ENCODE measurements at regions of chr7 and their contacts with region 1.

Region 1: GRCh38 chr7:15874774-15875173 is 188.3 kb upstream of the MEOX2 start:
- DNase-seq: no peak
- ATAC-seq: no peak
- H3K4me3 ChIP-seq: no peak overlapping the region
- H3K4me3 Mint-ChIP-seq: no peak overlapping the region
- H3K27ac ChIP-seq: no peak overlapping the region
- H3K27ac Mint-ChIP-seq: no peak overlapping the region
- H3K4me1 ChIP-seq: no peaks in the 10 kb centered on the region
- H3K4me1 Mint-ChIP-seq: no peaks in the 10 kb centered on the region
- H3K27me3 ChIP-seq: no peaks in the 10 kb centered on the region
- H3K27me3 Mint-ChIP-seq: no peaks in the 10 kb centered on the region

Region 2: DNA sequence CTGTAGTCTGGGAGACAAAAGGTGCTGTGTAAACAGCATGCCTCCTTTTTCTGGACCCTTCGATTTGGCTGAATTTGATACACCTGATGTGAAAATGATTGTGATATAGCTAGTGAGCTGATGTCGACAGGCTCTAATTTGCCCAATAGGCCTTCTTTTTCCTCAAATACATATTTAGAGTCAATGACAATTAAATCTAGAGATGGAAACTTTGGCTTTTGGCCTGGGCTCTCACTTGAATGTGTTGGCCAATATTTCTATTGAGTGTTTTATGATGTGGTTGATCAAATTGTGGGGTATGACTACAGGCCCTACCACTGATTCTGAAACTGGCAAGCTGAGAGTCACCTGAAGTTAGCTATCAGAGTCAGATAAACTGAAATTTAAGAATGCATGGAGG is 36.5 kb before region 1 on chr7:
- CTCF ChIA-PET with region 1: no interaction called
- POLR2A ChIA-PET with region 1: no interaction called
- intact Hi-C with region 1: loop called in 1 of 2 experiments (anchors 1 kb)
- DNase-seq: no peak
- ATAC-seq: no peak
- H3K4me3 ChIP-seq: no peak overlapping the region
- H3K4me3 Mint-ChIP-seq: no peak overlapping the region
- H3K27ac ChIP-seq: no peak overlapping the region
- H3K27ac Mint-ChIP-seq: no peak overlapping the region
- H3K4me1 ChIP-seq: no peaks in the 10 kb centered on the region
- H3K4me1 Mint-ChIP-seq: no peaks in the 10 kb centered on the region
- H3K27me3 ChIP-seq: no peaks in the 10 kb centered on the region
- H3K27me3 Mint-ChIP-seq: no peaks in the 10 kb centered on the region

Region 3: DNA sequence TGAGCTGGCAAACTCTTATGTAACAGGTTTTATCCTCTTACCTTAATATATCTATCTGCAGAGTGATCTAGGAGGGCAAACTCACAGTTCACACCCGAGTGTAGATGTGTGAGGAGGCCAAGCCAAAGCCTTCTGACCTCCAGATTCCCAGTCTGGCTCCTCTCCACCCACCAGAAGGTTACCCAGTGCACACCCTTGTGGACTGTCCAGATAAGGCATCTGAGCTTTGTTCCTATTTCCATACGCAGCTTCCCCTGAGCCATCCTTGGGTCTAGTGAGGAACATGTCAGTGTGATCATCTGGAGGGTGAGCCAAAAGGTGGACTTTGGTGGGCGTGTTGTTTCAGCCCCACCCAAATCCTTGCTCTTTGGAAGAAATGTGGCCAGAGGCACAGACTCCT is 14.7 kb after region 1 on chr7:
- CTCF ChIA-PET with region 1: no interaction called
- POLR2A ChIA-PET with region 1: no interaction called
- intact Hi-C with region 1: no loop called
- DNase-seq: no peak
- ATAC-seq: no peak
- H3K4me3 ChIP-seq: no peak overlapping the region
- H3K4me3 Mint-ChIP-seq: no peak overlapping the region
- H3K27ac ChIP-seq: no peak overlapping the region
- H3K27ac Mint-ChIP-seq: no peak overlapping the region
- H3K4me1 ChIP-seq: no peaks in the 10 kb centered on the region
- H3K4me1 Mint-ChIP-seq: no peaks in the 10 kb centered on the region
- H3K27me3 ChIP-seq: no peaks in the 10 kb centered on the region
- H3K27me3 Mint-ChIP-seq: no peaks in the 10 kb centered on the region

Region 4: DNA sequence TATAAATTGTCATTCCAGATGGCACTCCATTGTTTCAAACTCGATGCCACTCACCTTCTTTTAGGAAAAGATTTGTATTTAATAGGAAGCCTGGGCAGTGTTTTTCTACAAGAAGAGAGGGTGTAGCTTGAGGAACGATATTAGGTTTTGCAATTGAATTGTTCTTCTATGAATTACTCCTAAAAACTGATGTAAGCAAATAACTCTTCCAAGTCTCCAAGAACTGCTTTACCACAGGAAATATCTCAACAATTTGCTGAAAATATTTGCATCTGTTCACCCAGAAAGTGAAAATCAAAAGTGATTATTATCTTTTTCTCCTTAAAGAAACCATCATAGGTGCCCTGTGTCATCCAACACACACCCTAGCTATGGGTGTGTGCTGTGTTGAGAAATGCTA is 73.0 kb after region 1 on chr7:
- CTCF ChIA-PET with region 1: no interaction called
- POLR2A ChIA-PET with region 1: no interaction called
- intact Hi-C with region 1: no loop called
- DNase-seq: no peak
- ATAC-seq: no peak
- H3K4me3 ChIP-seq: no peak overlapping the region
- H3K4me3 Mint-ChIP-seq: no peak overlapping the region
- H3K27ac ChIP-seq: no peak overlapping the region
- H3K27ac Mint-ChIP-seq: no peak overlapping the region
- H3K4me1 ChIP-seq: no peaks in the 10 kb centered on the region
- H3K4me1 Mint-ChIP-seq: no peaks in the 10 kb centered on the region
- H3K27me3 ChIP-seq: no peaks in the 10 kb centered on the region
- H3K27me3 Mint-ChIP-seq: no peaks in the 10 kb centered on the region

Measured in naive thymus-derived CD4-positive, alpha-beta T cell (primary cell).